Naive thymus-derived CD8-positive, alpha-beta T cell (primary cell): ENCODE measurements at regions of chr22 and their contacts with region 1.

Region 1: DNA sequence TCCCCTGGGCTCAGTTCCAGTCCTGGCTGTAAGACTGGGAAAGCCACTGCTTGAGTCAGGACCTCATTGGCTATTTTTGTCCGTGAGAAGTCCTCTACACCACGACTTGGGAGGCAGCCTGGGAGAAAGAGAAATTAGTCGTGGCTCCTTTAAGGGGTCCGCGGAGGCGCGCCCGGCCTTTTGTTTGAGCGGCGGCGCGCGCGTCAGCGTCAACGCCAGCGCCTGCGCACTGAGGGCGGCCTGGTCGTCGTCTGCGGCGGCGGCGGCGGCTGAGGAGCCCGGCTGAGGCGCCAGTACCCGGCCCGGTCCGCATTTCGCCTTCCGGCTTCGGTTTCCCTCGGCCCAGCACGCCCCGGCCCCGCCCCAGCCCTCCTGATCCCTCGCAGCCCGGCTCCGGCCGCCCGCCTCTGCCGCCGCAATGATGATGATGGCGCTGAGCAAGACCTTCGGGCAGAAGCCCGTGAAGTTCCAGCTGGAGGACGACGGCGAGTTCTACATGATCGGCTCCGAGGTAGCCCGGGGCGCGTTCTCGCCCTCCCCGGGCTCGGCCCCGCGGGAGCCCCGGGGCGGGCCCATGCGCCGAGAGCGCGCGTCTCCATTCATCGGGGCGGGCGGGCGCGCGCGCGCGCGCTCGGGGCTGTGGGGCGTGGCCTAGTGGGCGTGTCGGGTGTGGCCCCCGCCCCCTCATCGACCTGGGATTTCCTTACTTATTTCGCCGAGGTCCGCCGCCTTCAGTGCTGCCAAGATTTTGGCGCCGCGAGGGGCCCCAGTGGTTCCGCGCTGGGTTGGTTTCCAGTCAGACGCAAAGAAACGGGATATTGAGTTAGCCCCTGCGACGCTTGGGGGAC is at the start of gene SMARCB1:
- DNase-seq: peak; percentile 75 to 93 (median 88)
- ATAC-seq: peak; percentile 75 to 77
- H3K4me3 Mint-ChIP-seq: peak within 1 kb of the TSS; percentile 85 to 94 (median 90)
- H3K27ac Mint-ChIP-seq: peak within 1 kb of the TSS; percentile 76 to 98 (median 96)
- H3K4me1 Mint-ChIP-seq: peaks cover 21 to 59% (median 45%) of the 10 kb centered on the region in 4 donors
- H3K27me3 Mint-ChIP-seq: no peaks in the 10 kb centered on the region
- polyA plus RNA-seq, gene SMARCB1: 33.3 to 45.0 (median 35.0) TPM

Region 2: DNA sequence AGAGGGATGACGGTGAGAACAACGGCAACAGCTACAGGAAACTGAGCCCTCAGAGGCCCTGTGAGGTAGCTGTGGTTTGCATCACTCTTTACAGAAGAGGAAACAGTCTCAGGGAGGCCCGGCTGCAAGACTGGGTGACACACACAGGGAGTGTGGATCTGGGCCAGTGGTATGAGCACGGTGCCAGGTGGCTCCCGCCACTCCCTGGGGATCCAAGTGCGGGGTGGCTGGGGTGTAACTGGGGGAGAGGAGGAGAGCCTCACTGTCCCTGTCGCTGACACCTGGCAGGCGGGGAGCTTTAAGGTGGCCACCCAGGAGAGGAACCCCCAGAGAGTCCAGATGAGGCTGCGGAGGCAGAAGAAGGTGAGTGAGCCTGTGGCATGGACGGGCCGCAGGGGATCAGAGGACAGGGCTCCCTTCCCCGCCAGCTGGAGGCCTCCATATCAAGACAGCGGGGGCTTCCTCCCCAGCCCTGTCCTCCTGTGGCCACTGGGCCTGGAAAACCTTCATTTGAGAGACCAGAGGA is 90.6 kb before region 1 on chr22:
- POLR2A ChIA-PET with region 1: interaction called, 20 read pairs
- DNase-seq: peak; percentile 51 to 92 (median 82)
- ATAC-seq: peak; percentile 99
- H3K4me3 Mint-ChIP-seq: peak overlapping the region; percentile 92 to 100 (median 99)
- H3K27ac Mint-ChIP-seq: peak overlapping the region; percentile 100
- H3K4me1 Mint-ChIP-seq: peaks cover 26 to 74% (median 47%) of the 10 kb centered on the region in 4 donors
- H3K27me3 Mint-ChIP-seq: no peaks in the 10 kb centered on the region

Region 3: DNA sequence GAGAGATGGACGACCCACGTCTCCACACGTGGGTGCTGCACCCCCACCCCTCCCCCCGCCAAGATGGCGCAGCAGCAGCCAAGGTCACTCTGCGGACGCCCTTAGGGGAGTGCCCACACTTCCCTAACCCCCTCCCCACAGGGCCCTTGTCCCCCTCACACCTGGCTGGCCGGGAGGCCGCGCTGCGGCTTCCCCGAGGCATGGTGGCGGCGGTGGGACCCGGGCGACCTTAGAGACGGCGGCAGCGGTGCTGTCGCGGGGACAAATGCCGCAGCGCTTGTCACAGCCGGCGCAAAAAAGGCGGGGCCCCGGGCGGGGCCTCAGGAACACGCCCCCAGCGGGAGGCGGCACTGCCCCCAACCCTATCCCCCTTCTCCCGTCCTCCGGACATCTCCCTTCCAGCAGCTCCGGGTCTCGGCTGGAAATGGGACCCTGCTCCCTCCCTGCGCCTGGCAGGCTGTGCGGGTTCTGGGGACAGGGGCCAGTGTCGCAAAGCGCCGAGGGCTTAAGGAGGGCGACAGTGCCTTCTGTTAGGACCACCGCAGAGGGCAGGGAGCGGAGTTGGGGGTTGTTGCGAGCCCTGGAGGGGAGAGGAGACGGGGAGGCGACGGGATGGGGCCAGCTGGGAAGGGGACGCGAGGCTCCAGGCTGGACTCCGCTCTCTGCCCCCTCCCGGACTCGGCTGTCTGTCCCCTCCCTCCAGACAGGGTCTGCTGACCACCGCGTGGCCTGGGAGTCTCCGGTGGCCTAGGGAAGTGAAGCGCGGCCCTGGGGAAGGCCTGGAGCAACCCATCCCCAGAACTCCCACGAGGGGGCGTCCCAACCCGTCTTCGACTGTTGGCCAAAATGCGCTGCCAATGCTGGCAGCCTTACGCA is 19.1 kb before region 1 on chr22 and contains the start of gene CHCHD10:
- POLR2A ChIA-PET with region 1: interaction called, 65 read pairs
- DNase-seq: peak; percentile 59 to 83 (median 75)
- ATAC-seq: peak; percentile 67 to 70
- H3K4me3 Mint-ChIP-seq: peak within 1 kb of the TSS; percentile 80 to 90 (median 83)
- H3K27ac Mint-ChIP-seq: peak within 1 kb of the TSS; percentile 58 to 92 (median 75)
- H3K4me1 Mint-ChIP-seq: peaks cover 13 to 67% (median 55%) of the 10 kb centered on the region in 4 donors
- H3K27me3 Mint-ChIP-seq: no peaks in the 10 kb centered on the region
- polyA plus RNA-seq, gene CHCHD10: 26.1 to 37.6 (median 36.0) TPM